Naive thymus-derived CD4-positive, alpha-beta T cell (primary cell): ENCODE measurements at regions of chr9 and their contacts with region 1.

Region 1: DNA sequence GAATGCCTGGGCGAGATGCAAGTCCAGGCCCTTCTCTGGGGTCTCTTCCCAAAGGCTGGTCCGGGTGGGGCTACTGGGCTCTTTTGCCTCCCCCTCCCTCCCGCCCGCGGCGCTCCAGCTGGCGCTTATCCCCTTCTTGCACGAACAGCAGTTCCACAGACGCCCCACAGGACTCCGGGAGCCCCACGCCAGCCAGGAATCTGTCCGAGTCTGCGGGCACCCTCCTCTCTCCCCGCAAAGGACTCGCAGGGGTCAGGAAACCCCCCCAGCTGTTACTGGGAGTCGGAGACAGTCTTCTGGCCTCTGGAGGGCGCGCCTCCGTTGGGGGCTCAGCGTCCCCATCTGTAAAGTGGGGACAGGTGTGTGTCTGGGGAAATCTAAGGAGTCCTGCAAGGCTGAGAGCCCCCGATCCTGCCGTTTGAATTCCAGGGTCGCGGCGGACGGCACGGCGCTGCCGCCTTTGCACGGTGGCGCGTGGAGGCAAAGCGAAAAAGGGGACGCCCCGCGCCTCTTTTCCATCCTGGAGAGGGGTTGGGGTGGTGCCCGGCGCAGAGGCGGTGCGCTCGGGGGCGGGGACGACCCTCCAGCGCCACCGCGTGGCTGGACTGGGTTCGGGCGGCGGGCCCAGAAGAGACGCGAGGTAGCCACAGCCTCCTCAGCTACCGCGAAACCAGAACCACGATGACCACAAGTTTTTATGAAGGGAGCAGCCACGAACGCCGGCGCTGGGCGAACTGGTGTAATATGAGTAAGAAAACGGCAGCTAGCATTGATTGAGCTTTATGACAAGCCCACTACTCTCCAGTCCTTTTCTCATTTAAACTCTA is 2.9 kb upstream of the CCIN start:
- DNase-seq: peak; percentile 57 to 92 (median 76)
- ATAC-seq: peak; percentile 99
- H3K4me3 ChIP-seq: peak overlapping the region; percentile 64
- H3K4me3 Mint-ChIP-seq: peak overlapping the region; percentile 60 to 78 (median 70)
- H3K27ac ChIP-seq: no peak overlapping the region
- H3K27ac Mint-ChIP-seq: peak overlapping the region; percentile 47 to 85 (median 56)
- H3K4me1 ChIP-seq: peaks cover 0 to 3% of the 10 kb centered on the region in 2 donors
- H3K4me1 Mint-ChIP-seq: peaks cover 2 to 17% (median 6%) of the 10 kb centered on the region in 7 donors
- H3K27me3 ChIP-seq: no peaks in the 10 kb centered on the region
- H3K27me3 Mint-ChIP-seq: peaks cover 0 to 14% (median 0%) of the 10 kb centered on the region in 5 donors

Region 2: DNA sequence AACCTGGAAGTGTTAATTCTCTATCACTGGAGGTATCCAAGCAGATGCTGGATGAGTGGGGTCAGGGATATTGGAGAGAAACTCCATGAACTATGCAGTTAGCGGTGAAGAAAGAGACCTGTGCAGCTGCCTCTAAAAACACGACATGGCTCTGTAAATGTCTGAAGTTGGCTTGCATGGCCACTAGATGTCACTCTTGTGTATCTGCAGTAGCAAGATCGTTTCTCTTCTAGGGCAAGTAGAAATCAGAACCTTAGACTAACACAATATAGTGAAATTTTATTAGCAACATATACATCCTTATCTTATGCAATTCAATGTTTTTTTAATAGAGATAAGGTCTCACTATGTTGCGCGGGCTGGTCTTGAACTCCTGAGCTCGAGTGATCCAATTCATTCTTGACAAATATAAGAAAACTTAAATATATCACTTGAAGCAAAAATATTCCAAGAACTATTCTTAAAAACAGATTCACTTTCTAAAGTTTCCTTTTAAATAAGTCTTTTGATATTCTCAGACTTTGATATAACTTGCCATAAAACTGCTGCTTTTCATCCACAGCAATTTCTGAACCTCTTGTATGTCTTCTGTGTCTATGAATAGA is 211.3 kb before region 1 on chr9:
- CTCF ChIA-PET with region 1: no interaction called
- POLR2A ChIA-PET with region 1: no interaction called
- intact Hi-C with region 1: loop called in 1 of 2 experiments (anchors 1 kb)
- DNase-seq: peak in 7 of 9 donors; percentile 47 to 74 (median 66)
- ATAC-seq: peak; percentile 90
- H3K4me3 ChIP-seq: no peak overlapping the region
- H3K4me3 Mint-ChIP-seq: peak overlapping the region in 1 of 10 donors; percentile 29
- H3K27ac ChIP-seq: no peak overlapping the region
- H3K27ac Mint-ChIP-seq: peak overlapping the region in 1 of 9 donors; percentile 13
- H3K4me1 ChIP-seq: no peaks in the 10 kb centered on the region
- H3K4me1 Mint-ChIP-seq: peaks cover 0 to 18% (median 8%) of the 10 kb centered on the region in 7 donors
- H3K27me3 ChIP-seq: no peaks in the 10 kb centered on the region
- H3K27me3 Mint-ChIP-seq: peaks cover 0 to 25% (median 0%) of the 10 kb centered on the region in 5 donors

Region 3: GRCh38 chr9:36036780-36037548 is 129.3 kb before region 1 on chr9 and contains the start of gene RECK:
- CTCF ChIA-PET with region 1: no interaction called
- POLR2A ChIA-PET with region 1: interaction called, 3 read pairs
- intact Hi-C with region 1: loop called in 1 of 2 experiments (anchors 5 kb)
- DNase-seq: peak; percentile 70 to 95 (median 80)
- ATAC-seq: peak; percentile 98
- H3K4me3 ChIP-seq: peak within 1 kb of the TSS; percentile 69
- H3K4me3 Mint-ChIP-seq: peak within 1 kb of the TSS; percentile 86 to 98 (median 92)
- H3K27ac ChIP-seq: peak within 1 kb of the TSS; percentile 72
- H3K27ac Mint-ChIP-seq: peak within 1 kb of the TSS; percentile 55 to 90 (median 81)
- H3K4me1 ChIP-seq: peaks cover 0 to 31% of the 10 kb centered on the region in 2 donors
- H3K4me1 Mint-ChIP-seq: peaks cover 27 to 50% (median 46%) of the 10 kb centered on the region in 7 donors
- H3K27me3 ChIP-seq: no peaks in the 10 kb centered on the region
- H3K27me3 Mint-ChIP-seq: peaks cover 0 to 21% (median 0%) of the 10 kb centered on the region in 5 donors
- total RNA-seq, gene RECK: 7.4 to 16.7 (median 13.3) TPM

Region 4: GRCh38 chr9:36127652-36128244 is 38.6 kb before region 1 on chr9:
- CTCF ChIA-PET with region 1: interaction called, 3 read pairs
- POLR2A ChIA-PET with region 1: no interaction called
- intact Hi-C with region 1: loop called in 1 of 2 experiments (anchors 5 kb)
- DNase-seq: no peak
- ATAC-seq: peak; percentile 86
- H3K4me3 ChIP-seq: no peak overlapping the region
- H3K4me3 Mint-ChIP-seq: peak overlapping the region in 1 of 10 donors; percentile 57
- H3K27ac ChIP-seq: no peak overlapping the region
- H3K27ac Mint-ChIP-seq: peak overlapping the region in 3 of 9 donors; percentile 26 to 65 (median 56)
- H3K4me1 ChIP-seq: peaks cover 14% of the 10 kb centered on the region in 2 donors
- H3K4me1 Mint-ChIP-seq: peaks cover 18 to 32% (median 29%) of the 10 kb centered on the region in 7 donors
- H3K27me3 ChIP-seq: no peaks in the 10 kb centered on the region
- H3K27me3 Mint-ChIP-seq: peaks cover 0 to 5% (median 0%) of the 10 kb centered on the region in 5 donors

Region 5: DNA sequence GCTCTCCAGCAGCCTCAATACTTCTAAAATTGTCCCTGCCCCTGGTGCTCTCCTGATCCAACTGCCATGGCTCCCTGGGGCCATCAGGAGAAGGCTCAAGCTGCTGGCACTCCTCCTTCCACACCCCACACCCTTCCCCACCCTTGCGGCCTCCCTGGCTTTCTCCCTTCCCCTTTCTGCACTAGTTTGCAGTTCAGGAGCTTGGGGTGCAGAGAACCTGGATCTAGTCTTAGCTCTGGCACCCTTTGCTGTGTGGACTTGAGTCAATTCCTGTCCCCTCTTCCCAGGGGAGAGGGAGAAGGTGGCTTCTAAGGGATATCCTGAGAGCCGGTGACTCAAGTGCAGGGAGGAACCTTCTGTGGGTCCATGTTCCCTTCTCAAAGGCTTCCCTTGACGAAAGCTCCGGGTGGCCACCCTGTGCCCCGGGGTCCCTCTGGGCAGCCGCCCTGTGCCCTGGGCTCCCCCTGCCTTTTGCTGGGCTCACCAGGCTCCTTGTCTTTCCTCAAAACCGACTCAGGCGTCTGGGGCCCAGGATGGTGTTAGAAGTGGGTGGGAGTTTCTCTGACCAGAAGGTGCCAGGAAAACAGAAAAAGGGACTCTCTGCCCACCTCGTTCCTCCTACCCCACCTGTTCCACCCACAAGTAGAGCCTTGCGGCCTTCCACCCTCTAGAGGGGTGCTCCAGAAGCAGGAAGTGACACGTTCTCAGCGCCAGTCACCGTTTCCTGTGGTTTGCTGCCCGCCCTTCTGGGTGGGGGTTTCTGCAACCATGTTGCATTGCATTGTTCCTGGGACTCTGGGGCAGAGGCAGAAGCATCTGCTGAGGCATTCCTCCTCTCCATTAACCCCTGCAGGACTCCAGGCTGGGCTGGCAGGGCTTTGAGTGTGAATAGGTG is 14.8 kb before region 1 on chr9:
- CTCF ChIA-PET with region 1: interaction called, 7 read pairs
- POLR2A ChIA-PET with region 1: interaction called, 5 read pairs
- intact Hi-C with region 1: loop called (anchors 1 kb)
- DNase-seq: peak; percentile 63 to 91 (median 87)
- ATAC-seq: peak; percentile 94
- H3K4me3 ChIP-seq: peak overlapping the region; percentile 53
- H3K4me3 Mint-ChIP-seq: peak overlapping the region; percentile 74 to 91 (median 88)
- H3K27ac ChIP-seq: peak overlapping the region; percentile 88
- H3K27ac Mint-ChIP-seq: peak overlapping the region; percentile 97 to 99 (median 99)
- H3K4me1 ChIP-seq: peaks cover 63 to 68% of the 10 kb centered on the region in 2 donors
- H3K4me1 Mint-ChIP-seq: peaks cover 46 to 68% (median 61%) of the 10 kb centered on the region in 7 donors
- H3K27me3 ChIP-seq: no peaks in the 10 kb centered on the region
- H3K27me3 Mint-ChIP-seq: no peaks in the 10 kb centered on the region